Astrocyte of the cerebellum (primary cell): ENCODE measurements at regions of chr11 and their contacts with region 1.

Region 1: GRCh38 chr11:68649851-68650555 is 34.3 kb upstream of the GAL start:
- DNase-seq: no peak
- H3K4me3 ChIP-seq: no peak overlapping the region
- CTCF ChIP-seq: no peak

Region 2: GRCh38 chr11:68704887-68705286 is 54.9 kb after region 1 on chr11:
- in situ Hi-C with region 1: loop called (anchors 5 kb)
- DNase-seq: no peak
- H3K4me3 ChIP-seq: no peak overlapping the region
- CTCF ChIP-seq: no peak

Region 3: GRCh38 chr11:68751004-68751856 is 101.2 kb after region 1 on chr11 and contains the start of gene TESMIN:
- in situ Hi-C with region 1: no loop called
- DNase-seq: no peak
- H3K4me3 ChIP-seq: peak within 1 kb of the TSS; percentile 31
- CTCF ChIP-seq: no peak